ENCODE measurements at regions of chr5 and their contacts with region 1.

Region 1: DNA sequence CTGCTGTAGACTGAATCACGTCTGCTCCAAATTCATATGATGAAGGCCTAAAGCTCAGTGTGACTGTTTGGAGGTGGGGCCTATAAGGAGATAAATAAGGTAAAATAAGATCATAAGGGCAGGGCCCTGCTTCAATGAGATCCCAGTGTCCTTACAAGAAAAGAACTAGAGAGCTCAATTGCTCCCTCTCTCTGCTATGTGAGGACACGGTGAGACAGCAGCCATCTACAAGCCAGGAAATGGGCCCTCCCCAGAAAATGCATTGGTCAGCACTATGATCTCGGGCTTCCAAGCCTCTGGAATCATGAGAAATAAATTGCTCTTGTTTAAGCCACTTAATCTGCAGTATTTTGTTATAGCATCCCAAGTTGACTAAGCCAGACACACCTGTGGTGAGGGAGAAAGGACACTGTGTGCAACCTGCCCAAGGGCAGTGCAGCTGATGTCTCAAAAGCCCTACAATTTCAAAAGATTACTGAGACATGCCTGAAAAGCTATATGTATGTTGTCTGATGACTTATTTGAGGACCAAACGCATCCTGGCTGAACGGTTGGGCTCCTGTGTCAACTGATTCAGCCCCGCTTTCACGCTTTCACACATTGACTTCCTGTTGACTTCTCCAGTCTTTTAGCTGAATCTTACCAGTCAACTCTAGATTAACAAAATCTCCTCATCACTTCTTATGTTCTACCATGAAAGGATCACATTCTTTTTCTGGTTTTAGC is 13.2 kb downstream of the GZMK start:
- DNase-seq: peak; percentile 89
- H3K4me3 Mint-ChIP-seq: peak overlapping the region; percentile 45
- H3K27ac Mint-ChIP-seq: peak overlapping the region; percentile 89
- H3K4me1 Mint-ChIP-seq: peaks cover 29% of the 10 kb centered on the region
- H3K27me3 Mint-ChIP-seq: no peaks in the 10 kb centered on the region

Region 2: DNA sequence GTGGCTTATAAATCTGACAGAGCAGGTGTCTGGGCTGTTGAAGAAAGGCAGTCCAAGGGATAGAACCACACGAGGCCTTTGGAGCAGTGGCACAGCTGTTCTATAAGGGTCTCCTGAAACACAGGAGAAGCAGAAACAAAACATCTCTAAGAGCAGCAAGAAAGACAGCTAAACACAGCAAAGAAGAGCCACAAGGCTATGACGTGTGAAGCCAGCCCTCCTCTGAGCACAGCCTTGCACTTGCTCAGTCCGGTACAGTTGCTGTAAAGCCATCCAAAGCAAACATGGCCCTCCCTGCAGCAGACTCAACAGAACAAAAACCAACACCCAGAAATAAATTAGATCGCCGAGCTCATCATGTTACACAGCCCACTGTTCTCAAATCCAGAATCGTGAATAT is 15.8 kb before region 1 on chr5:
- CTCF ChIA-PET with region 1: interaction called, 13 read pairs
- POLR2A ChIA-PET with region 1: interaction called, 20 read pairs
- intact Hi-C with region 1: no loop called
- DNase-seq: no peak
- H3K4me3 Mint-ChIP-seq: no peak overlapping the region
- H3K27ac Mint-ChIP-seq: no peak overlapping the region
- H3K4me1 Mint-ChIP-seq: peaks cover 43% of the 10 kb centered on the region
- H3K27me3 Mint-ChIP-seq: no peaks in the 10 kb centered on the region

Region 3: GRCh38 chr5:55062039-55062779 is 25.0 kb after region 1 on chr5:
- CTCF ChIA-PET with region 1: interaction called, 6 read pairs
- POLR2A ChIA-PET with region 1: interaction called, 6 read pairs
- intact Hi-C with region 1: loop called (anchors 1 kb)
- DNase-seq: peak; percentile 83
- H3K4me3 Mint-ChIP-seq: peak overlapping the region; percentile 63
- H3K27ac Mint-ChIP-seq: peak overlapping the region; percentile 80
- H3K4me1 Mint-ChIP-seq: peaks cover 44% of the 10 kb centered on the region
- H3K27me3 Mint-ChIP-seq: no peaks in the 10 kb centered on the region

Region 4: DNA sequence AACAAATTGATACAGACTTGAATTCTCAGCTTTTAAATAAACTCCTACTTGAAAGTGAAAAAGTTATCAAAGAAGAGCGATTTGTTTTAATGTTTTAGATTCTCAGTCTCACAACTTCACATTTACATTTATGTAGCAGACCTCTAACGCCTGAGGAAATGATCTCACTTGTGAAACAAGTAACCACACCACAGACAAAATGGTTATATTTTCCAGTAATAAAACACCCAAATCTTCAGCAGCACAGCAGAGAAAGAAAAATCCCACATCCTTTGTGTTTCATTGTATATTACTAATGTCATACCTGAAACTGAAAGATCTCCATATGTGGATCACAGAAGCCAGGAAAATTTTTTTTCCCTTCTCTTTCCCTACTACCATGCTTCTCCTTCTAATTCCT is 35.5 kb after region 1 on chr5:
- CTCF ChIA-PET with region 1: interaction called, 4 read pairs
- POLR2A ChIA-PET with region 1: interaction called, 5 read pairs
- intact Hi-C with region 1: loop called (anchors 1 kb)
- DNase-seq: no peak
- H3K4me3 Mint-ChIP-seq: peak overlapping the region; percentile 16
- H3K27ac Mint-ChIP-seq: peak overlapping the region; percentile 75
- H3K4me1 Mint-ChIP-seq: peaks cover 31% of the 10 kb centered on the region
- H3K27me3 Mint-ChIP-seq: no peaks in the 10 kb centered on the region

Region 5: DNA sequence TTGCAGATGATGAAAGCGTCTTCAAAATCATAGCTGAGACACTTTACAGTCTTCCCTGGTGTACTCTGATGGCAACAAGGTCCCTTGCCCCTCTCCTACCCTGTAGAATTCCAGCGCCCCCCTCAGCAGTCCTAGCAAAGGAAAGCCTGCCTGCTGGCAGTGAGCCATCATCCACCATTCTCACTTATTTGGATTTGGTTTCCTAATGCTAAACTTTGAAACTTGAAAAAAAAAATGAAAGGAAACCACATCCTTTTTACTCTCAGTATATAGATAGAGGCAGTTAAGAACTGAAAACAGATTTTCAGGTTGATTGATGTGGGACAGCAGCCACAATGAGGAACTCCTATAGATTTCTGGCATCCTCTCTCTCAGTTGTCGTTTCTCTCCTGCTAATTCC is 65.1 kb after region 1 on chr5 and contains the start of gene GZMA:
- CTCF ChIA-PET with region 1: interaction called, 5 read pairs
- POLR2A ChIA-PET with region 1: interaction called, 5 read pairs
- intact Hi-C with region 1: loop called (anchors 1 kb)
- DNase-seq: peak; percentile 39
- H3K4me3 Mint-ChIP-seq: peak within 1 kb of the TSS; percentile 59
- H3K27ac Mint-ChIP-seq: peak within 1 kb of the TSS; percentile 77
- H3K4me1 Mint-ChIP-seq: peaks cover 65% of the 10 kb centered on the region
- H3K27me3 Mint-ChIP-seq: peaks cover 2% of the 10 kb centered on the region
- total RNA-seq, gene GZMA: 13.7 to 16.9 TPM

Region 6: DNA sequence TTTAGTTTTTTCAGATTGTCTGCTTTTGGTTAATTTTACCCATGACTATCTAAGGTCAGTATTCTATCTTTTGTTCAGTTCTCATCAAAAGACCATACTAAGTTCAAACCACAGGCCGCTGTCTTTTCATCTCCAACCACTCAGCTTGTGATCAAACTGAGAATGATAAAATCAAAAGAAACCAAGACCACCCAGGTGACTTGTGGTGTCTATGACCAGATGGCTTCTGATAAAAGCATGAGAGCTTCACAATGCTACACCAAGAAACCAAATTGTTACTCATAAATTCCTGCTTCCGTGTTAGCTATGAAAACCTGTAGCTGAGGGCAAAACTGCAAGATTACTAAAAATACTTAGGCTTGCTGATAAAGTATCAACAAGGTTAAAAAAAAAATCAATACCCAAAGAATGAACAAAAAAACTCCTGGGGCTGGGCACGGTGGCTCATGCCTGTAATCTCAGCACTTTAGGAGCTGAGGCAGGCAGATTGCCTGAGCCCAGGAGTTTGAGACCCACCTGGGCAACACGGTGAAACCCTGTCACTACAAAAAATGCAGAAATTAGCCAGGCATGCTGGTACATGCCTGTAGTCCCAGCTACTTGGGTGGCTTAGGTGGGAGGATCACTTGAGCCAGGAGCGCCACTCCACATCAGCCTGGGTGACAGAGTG is 97.0 kb after region 1 on chr5:
- CTCF ChIA-PET with region 1: no interaction called
- POLR2A ChIA-PET with region 1: interaction called, 7 read pairs
- intact Hi-C with region 1: loop called (anchors 1 kb)
- DNase-seq: peak; percentile 16
- H3K4me3 Mint-ChIP-seq: no peak overlapping the region
- H3K27ac Mint-ChIP-seq: no peak overlapping the region
- H3K4me1 Mint-ChIP-seq: peaks cover 8% of the 10 kb centered on the region
- H3K27me3 Mint-ChIP-seq: peaks cover 6% of the 10 kb centered on the region

Region 7: GRCh38 chr5:55421074-55421529 is 383.9 kb after region 1 on chr5:
- CTCF ChIA-PET with region 1: no interaction called
- POLR2A ChIA-PET with region 1: no interaction called
- intact Hi-C with region 1: loop called (anchors 2 kb)
- DNase-seq: peak; percentile 37
- H3K4me3 Mint-ChIP-seq: no peak overlapping the region
- H3K27ac Mint-ChIP-seq: peak overlapping the region; percentile 15
- H3K4me1 Mint-ChIP-seq: peaks cover 34% of the 10 kb centered on the region
- H3K27me3 Mint-ChIP-seq: no peaks in the 10 kb centered on the region

Measured in activated CD4-positive, alpha-beta memory T cell treated with anti-CD3 and anti-CD28 coated beads for 36 hours (primary cell).